ENCODE measurements at regions of chr19 and their contacts with region 1.

Region 1: GRCh38 chr19:12202250-12202649 is 39.4 kb downstream of the ZNF136 start:
- DNase-seq: peak in 8 of 9 donors; percentile 20 to 68 (median 46)
- ATAC-seq: peak; percentile 82
- H3K4me3 ChIP-seq: no peak overlapping the region
- H3K4me3 Mint-ChIP-seq: peak overlapping the region in 4 of 10 donors; percentile 3 to 54 (median 25)
- H3K27ac ChIP-seq: no peak overlapping the region
- H3K27ac Mint-ChIP-seq: peak overlapping the region in 6 of 9 donors; percentile 26 to 81 (median 61)
- H3K4me1 ChIP-seq: no peaks in the 10 kb centered on the region
- H3K4me1 Mint-ChIP-seq: peaks cover 6 to 53% (median 22%) of the 10 kb centered on the region in 7 donors
- H3K27me3 ChIP-seq: no peaks in the 10 kb centered on the region
- H3K27me3 Mint-ChIP-seq: no peaks in the 10 kb centered on the region

Region 2: DNA sequence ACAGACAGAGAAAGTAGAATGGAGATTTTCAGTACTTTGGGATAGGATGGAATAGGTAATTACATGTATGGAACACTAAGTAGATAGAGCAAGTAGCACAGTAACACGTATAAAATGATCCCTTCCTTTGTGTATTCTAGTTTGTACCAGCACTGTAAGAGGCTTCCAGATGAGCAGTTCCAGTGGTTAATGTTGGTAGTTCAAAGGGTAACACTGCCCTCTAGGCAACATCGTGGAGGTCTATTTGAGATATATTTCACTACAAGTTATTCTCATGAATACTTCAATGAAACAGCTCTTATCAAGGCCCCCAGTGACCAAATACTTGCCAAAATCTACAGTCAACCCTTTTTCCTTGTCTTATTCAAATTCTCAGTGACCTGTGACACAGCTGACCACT is 144.6 kb after region 1 on chr19:
- CTCF ChIA-PET with region 1: no interaction called
- POLR2A ChIA-PET with region 1: no interaction called
- intact Hi-C with region 1: loop called in 1 of 2 experiments (anchors 1 kb)
- DNase-seq: peak in 5 of 9 donors; percentile 19 to 52 (median 32)
- ATAC-seq: peak; percentile 68
- H3K4me3 ChIP-seq: no peak overlapping the region
- H3K4me3 Mint-ChIP-seq: no peak overlapping the region
- H3K27ac ChIP-seq: no peak overlapping the region
- H3K27ac Mint-ChIP-seq: peak overlapping the region in 1 of 9 donors; percentile 36
- H3K4me1 ChIP-seq: no peaks in the 10 kb centered on the region
- H3K4me1 Mint-ChIP-seq: peaks cover 0 to 2% (median 0%) of the 10 kb centered on the region in 7 donors
- H3K27me3 ChIP-seq: no peaks in the 10 kb centered on the region
- H3K27me3 Mint-ChIP-seq: no peaks in the 10 kb centered on the region

Region 3: DNA sequence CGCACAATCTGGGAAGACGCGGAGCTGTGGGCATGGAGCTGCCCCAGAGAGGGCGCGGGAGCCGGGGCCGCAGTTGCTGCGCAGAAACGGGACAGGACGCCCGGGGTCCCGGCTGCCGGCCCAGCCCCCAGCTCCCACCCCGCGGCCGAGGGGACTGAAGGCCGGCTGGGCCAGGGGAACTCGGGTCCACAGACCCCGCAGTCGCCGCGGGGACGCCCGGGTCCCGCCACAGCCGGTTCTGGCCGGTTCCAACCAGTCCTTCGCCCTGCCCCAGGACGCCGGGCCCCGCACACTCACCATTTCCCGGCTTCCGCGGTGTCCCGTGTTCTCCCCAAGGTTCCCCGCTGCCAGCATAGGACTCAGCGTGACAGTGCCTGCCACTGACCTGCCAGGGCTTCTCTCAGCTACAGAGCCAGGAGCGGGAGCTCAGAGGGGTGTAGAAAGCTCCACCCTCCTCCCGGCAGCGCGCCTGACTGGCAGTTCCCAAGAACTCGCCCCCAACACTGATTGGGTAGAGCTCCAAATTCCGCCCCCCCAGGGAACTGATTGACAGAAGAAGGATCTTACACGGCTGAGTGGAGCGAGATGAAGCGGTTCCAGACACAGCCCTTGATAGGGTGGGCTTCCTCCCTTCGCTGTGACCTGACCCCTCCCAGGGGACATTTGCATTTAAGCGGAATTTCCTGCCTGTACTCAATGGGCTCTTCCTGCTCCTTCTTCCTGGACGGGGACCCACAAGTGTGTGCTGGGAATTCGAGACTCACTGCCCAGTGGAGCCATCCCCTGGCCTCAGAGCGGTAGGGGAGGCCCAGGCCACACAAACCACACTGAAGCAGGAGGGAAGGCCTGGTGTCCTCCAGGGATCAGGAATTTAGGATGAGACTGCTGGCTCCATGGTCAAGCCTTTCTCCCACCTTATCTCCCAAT is 163.2 kb after region 1 on chr19 and contains the start of gene ZNF442:
- CTCF ChIA-PET with region 1: no interaction called
- POLR2A ChIA-PET with region 1: interaction called, 3 read pairs
- intact Hi-C with region 1: loop called in 1 of 2 experiments (anchors 1 kb)
- DNase-seq: peak; percentile 56 to 88 (median 80)
- ATAC-seq: peak; percentile 99
- H3K4me3 ChIP-seq: peak within 1 kb of the TSS; percentile 66
- H3K4me3 Mint-ChIP-seq: peak within 1 kb of the TSS; percentile 92 to 99 (median 97)
- H3K27ac ChIP-seq: peak within 1 kb of the TSS; percentile 68
- H3K27ac Mint-ChIP-seq: peak within 1 kb of the TSS; percentile 68 to 91 (median 85)
- H3K4me1 ChIP-seq: peaks cover 7 to 10% of the 10 kb centered on the region in 2 donors
- H3K4me1 Mint-ChIP-seq: peaks cover 0 to 33% (median 24%) of the 10 kb centered on the region in 7 donors
- H3K27me3 ChIP-seq: no peaks in the 10 kb centered on the region
- H3K27me3 Mint-ChIP-seq: peaks cover 0 to 10% (median 0%) of the 10 kb centered on the region in 5 donors
- total RNA-seq, gene ZNF442: 0.44 to 6.0 (median 0.58) TPM

Region 4: DNA sequence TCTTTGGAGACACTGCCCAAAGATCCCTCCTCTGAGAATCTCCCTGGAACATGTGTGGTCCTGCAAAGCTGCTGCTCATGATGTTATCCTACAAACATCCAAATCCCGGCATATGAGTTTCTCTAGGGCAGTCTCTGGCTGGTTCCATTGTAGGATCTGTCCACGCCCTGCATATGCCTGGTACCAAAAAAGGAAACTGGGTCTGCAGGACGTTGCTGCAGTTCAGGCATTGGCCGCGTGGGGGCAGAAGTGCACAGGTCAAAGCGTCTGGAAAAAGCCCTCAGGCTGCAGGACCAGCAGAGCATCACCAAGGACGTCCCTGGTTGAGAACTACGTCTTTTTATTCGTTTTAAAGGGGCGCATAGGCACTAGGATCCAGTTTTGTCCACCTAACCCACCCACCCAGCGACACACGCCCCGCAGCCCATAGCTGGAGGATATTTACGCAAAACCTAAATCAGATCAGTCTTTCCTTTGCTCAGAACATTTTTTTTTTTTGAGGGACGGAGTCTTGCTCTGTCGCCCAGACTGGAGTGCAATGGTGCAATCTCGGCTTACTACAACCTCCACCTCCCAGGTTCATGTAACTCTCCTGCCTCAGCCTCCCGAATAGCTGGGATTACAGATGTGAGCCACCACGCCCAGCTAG is 361.9 kb after region 1 on chr19:
- CTCF ChIA-PET with region 1: no interaction called
- POLR2A ChIA-PET with region 1: no interaction called
- intact Hi-C with region 1: loop called in 1 of 2 experiments (anchors 1 kb)
- DNase-seq: peak; percentile 79 to 96 (median 88)
- ATAC-seq: peak; percentile 100
- H3K4me3 ChIP-seq: no peak overlapping the region
- H3K4me3 Mint-ChIP-seq: peak overlapping the region in 1 of 10 donors; percentile 33
- H3K27ac ChIP-seq: no peak overlapping the region
- H3K27ac Mint-ChIP-seq: peak overlapping the region in 2 of 9 donors; percentile 3 to 51
- H3K4me1 ChIP-seq: no peaks in the 10 kb centered on the region
- H3K4me1 Mint-ChIP-seq: peaks cover 0 to 6% (median 5%) of the 10 kb centered on the region in 7 donors
- H3K27me3 ChIP-seq: no peaks in the 10 kb centered on the region
- H3K27me3 Mint-ChIP-seq: no peaks in the 10 kb centered on the region

Region 5: GRCh38 chr19:12672744-12673143 is 470.5 kb after region 1 on chr19:
- CTCF ChIA-PET with region 1: interaction called, 3 read pairs
- POLR2A ChIA-PET with region 1: no interaction called
- intact Hi-C with region 1: loop called in 1 of 2 experiments (anchors 1 kb)
- DNase-seq: no peak
- ATAC-seq: no peak
- H3K4me3 ChIP-seq: no peak overlapping the region
- H3K4me3 Mint-ChIP-seq: no peak overlapping the region
- H3K27ac ChIP-seq: no peak overlapping the region
- H3K27ac Mint-ChIP-seq: no peak overlapping the region
- H3K4me1 ChIP-seq: peaks cover 16 to 25% of the 10 kb centered on the region in 2 donors
- H3K4me1 Mint-ChIP-seq: peaks cover 28 to 48% (median 36%) of the 10 kb centered on the region in 7 donors
- H3K27me3 ChIP-seq: no peaks in the 10 kb centered on the region
- H3K27me3 Mint-ChIP-seq: no peaks in the 10 kb centered on the region

Measured in naive thymus-derived CD4-positive, alpha-beta T cell (primary cell).